Activated CD4-positive, alpha-beta T cell treated with anti-CD3 and anti-CD28 coated beads, Interleukin-2, amount 10 ng/mL, durations not matched to agents 7 days and 5 days (primary cell): ENCODE measurements at regions of chr17 and their contacts with region 1.

Region 1: DNA sequence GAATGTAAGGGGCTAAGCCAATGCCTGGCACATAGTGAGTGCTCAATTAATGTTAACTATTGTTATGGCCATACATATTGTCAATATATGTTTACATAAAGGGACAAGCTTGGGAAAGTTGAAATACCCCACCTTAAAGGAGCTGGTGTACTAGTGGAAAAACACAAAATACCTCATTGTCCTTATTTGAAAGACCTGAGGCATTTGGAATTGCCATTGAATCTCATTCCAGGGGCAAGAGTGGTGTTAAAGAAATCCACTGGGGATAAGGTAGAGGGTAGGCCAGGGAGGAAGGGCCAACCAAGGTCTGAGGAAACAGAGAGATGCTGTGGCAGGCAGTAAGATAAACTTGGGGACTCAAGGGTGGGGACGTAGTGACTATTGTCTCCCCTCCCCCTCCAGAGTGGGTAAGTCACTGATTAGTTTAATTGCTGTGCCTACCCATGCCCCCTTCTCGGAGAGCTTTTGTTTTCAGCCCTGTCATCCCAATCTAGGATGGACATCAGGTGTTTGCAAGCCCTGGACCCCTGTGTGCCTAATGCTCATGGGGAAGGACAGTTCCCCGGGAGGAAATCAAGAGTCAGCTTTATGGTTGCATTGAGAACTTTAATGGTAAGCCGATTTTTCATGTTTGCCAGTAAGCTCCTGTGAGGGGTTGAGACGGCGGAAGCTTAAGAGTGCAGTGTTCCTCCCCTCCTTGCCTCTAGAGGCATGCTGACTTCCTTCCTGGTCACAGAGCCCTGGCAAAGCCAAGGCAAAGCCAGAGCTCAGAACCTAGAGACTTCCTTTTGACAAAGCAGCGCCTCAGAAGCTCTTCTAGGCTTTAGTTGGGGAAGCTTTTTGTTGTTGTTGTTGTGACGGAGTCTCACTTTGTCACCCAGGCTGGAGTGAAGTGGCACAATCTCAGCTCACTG is 2.5 kb upstream of the HEATR9 start:
- DNase-seq: peak; percentile 59
- H3K4me3 Mint-ChIP-seq: no peak overlapping the region
- H3K27ac Mint-ChIP-seq: peak overlapping the region; percentile 71
- H3K4me1 Mint-ChIP-seq: peaks cover 54% of the 10 kb centered on the region
- H3K27me3 Mint-ChIP-seq: no peaks in the 10 kb centered on the region

Region 2: DNA sequence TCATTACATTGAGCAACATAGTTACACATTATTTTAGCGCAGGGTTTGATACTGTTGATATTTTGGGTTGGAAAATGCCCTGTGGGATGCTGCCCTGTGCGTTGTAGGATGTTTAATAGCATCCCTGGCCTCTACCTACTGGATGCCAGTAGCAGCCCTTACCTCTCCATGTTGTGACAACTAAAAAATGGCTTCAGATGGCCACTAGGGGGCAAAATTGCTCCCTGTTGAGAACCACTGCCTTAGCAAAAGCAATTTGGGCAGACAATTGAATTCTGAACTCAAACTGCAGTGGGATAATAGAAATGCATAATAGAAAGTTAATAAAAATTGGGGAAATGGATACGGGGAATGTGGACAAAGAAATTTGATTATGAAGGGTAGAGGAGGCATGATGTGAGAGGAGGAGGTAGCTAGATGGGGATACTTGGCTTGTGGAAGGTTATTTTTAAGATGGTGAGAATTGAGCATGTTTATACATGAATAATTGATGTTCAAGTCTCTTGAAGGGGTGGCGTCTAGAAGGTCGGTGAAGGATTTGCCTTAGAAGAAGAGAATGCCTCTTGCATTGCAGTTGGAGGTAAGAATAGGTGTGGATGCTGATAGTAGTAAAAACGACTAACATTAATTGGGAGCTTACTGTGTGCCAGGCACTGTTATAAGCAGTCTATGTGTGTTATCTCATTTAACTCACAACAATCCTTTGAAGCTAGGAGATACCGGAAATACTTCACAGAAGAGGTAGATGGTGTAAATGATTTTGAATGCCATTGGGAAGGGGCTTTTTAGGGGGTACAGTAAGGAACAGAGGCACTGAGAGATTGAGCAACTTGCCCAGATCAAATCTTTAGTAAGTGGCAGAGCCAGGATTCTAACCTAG is 21.5 kb before region 1 on chr17:
- CTCF ChIA-PET with region 1: interaction called, 10 read pairs
- POLR2A ChIA-PET with region 1: no interaction called
- DNase-seq: peak; percentile 79
- H3K4me3 Mint-ChIP-seq: no peak overlapping the region
- H3K27ac Mint-ChIP-seq: peak overlapping the region; percentile 33
- H3K4me1 Mint-ChIP-seq: peaks cover 18% of the 10 kb centered on the region
- H3K27me3 Mint-ChIP-seq: no peaks in the 10 kb centered on the region

Region 3: GRCh38 chr17:35889818-35890763 is 18.9 kb after region 1 on chr17:
- CTCF ChIA-PET with region 1: interaction called, 14 read pairs
- POLR2A ChIA-PET with region 1: no interaction called
- DNase-seq: no peak
- H3K4me3 Mint-ChIP-seq: no peak overlapping the region
- H3K27ac Mint-ChIP-seq: peak overlapping the region; percentile 90
- H3K4me1 Mint-ChIP-seq: peaks cover 55% of the 10 kb centered on the region
- H3K27me3 Mint-ChIP-seq: no peaks in the 10 kb centered on the region